ENCODE measurements at regions of chr18 and their contacts with region 1.

Region 1: GRCh38 chr18:13464432-13465123 is 246.0 kb downstream of the LDLRAD4 start:
- DNase-seq: peak; percentile 86
- H3K4me3 Mint-ChIP-seq: peak overlapping the region; percentile 82
- H3K27ac Mint-ChIP-seq: peak overlapping the region; percentile 95
- H3K4me1 Mint-ChIP-seq: peaks cover 56% of the 10 kb centered on the region
- H3K27me3 Mint-ChIP-seq: no peaks in the 10 kb centered on the region

Region 2: GRCh38 chr18:13427354-13427753 is 37.2 kb before region 1 on chr18:
- CTCF ChIA-PET with region 1: no interaction called
- intact Hi-C with region 1: no loop called
- DNase-seq: no peak
- H3K4me3 Mint-ChIP-seq: no peak overlapping the region
- H3K27ac Mint-ChIP-seq: no peak overlapping the region
- H3K4me1 Mint-ChIP-seq: peaks cover 19% of the 10 kb centered on the region
- H3K27me3 Mint-ChIP-seq: no peaks in the 10 kb centered on the region

Region 3: DNA sequence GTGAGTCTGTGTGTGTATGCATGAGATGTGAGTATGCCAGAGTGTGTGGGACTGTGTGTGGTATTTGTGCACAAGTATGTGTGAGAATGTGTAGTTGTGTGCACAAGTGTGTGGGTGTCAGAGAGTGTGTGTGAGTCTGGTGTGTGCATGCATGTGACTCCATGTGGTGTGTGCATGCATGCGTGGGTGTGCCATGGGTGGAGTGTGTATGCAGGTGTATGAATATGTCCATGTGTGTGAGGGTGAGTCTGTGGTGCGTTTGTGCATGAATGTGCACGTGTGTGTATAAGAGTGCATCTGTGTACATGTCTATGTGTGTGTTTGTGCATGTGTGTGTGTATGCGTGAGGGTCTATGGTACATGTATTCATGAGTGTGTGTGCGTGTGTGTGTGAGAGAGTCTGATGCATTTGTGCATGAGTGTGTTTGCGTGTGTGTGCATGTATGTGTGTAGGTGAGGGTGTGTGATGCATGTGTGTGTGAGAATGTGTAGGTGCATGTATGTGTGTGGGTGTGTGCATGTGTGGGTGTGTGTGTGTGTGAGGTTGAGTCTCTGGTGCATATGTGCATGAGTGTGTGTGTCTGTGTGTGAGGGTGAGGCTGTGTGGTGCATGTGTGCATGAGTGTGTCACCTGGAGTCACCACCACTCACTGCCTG is 19.2 kb before region 1 on chr18:
- CTCF ChIA-PET with region 1: no interaction called
- intact Hi-C with region 1: no loop called
- DNase-seq: no peak
- H3K4me3 Mint-ChIP-seq: no peak overlapping the region
- H3K27ac Mint-ChIP-seq: no peak overlapping the region
- H3K4me1 Mint-ChIP-seq: peaks cover 12% of the 10 kb centered on the region
- H3K27me3 Mint-ChIP-seq: no peaks in the 10 kb centered on the region

Region 4: GRCh38 chr18:13530879-13531387 is 66.4 kb after region 1 on chr18:
- CTCF ChIA-PET with region 1: no interaction called
- intact Hi-C with region 1: loop called (anchors 10 kb)
- DNase-seq: peak; percentile 51
- H3K4me3 Mint-ChIP-seq: no peak overlapping the region
- H3K27ac Mint-ChIP-seq: peak overlapping the region; percentile 6
- H3K4me1 Mint-ChIP-seq: peaks cover 26% of the 10 kb centered on the region
- H3K27me3 Mint-ChIP-seq: no peaks in the 10 kb centered on the region

Region 5: GRCh38 chr18:13585379-13586153 is 121.0 kb after region 1 on chr18:
- CTCF ChIA-PET with region 1: no interaction called
- intact Hi-C with region 1: loop called (anchors 5 kb)
- DNase-seq: no peak
- H3K4me3 Mint-ChIP-seq: no peak overlapping the region
- H3K27ac Mint-ChIP-seq: no peak overlapping the region
- H3K4me1 Mint-ChIP-seq: peaks cover 44% of the 10 kb centered on the region
- H3K27me3 Mint-ChIP-seq: no peaks in the 10 kb centered on the region

Measured in activated naive CD4-positive, alpha-beta T cell treated with anti-CD3 and anti-CD28 coated beads for 36 hours (primary cell).